Common myeloid progenitor, CD34-positive (primary cell): ENCODE measurements at regions of chr9 and their contacts with region 1.

Region 1: GRCh38 chr9:94002316-94003140 is 47.4 kb upstream of the BARX1 start:
- DNase-seq: peak; percentile 54 to 79 (median 72)
- H3K4me3 ChIP-seq: no peak overlapping the region
- H3K27ac ChIP-seq: no peak overlapping the region
- H3K4me1 ChIP-seq: no peaks in the 10 kb centered on the region
- H3K27me3 ChIP-seq: peaks cover 0 to 6% (median 2%) of the 10 kb centered on the region in 5 experiments

Region 2: DNA sequence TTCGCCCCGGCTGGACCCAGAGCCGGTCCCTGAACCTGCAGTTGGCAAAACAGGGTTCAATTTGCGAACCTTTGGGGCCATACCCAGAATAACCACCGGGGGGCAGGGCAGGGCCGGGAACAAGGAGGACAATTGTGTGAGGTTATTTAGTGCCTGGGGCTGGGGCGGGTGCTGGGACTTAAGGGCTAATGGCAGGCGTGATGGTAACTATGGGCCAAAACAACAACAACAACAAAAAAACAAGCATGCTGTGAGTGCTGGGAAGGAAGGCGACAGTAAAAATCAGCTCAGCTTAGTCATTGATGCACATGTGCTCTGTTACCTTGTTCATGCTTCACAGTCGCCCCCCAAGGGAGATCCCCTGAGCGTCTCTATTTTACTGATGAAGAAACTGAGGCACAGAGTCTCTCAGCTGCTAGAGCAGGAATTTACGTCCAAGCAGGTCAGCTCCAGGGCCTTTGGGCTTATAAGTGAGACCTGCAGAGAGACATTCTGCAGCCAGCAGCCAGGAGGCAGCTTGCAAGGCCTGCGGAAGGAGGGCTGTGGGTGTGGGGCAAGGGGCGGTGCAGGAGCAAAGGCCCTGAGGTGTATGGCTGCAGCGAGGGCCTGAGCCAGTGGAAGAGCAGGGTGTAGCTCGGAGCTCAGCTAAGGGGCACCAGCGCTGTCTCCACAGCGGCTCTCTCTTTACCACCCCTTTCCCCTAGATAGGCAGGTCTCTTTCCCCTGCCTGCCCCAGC is 320.1 kb before region 1 on chr9:
- CTCF ChIA-PET with region 1: interaction called, 27 read pairs
- POLR2A ChIA-PET with region 1: no interaction called
- DNase-seq: peak; percentile 35 to 60 (median 51)
- H3K4me3 ChIP-seq: no peak overlapping the region
- H3K27ac ChIP-seq: no peak overlapping the region
- H3K4me1 ChIP-seq: peaks cover 0 to 2% (median 0%) of the 10 kb centered on the region in 4 experiments
- H3K27me3 ChIP-seq: peaks cover 0 to 2% (median 0%) of the 10 kb centered on the region in 5 experiments

Region 3: DNA sequence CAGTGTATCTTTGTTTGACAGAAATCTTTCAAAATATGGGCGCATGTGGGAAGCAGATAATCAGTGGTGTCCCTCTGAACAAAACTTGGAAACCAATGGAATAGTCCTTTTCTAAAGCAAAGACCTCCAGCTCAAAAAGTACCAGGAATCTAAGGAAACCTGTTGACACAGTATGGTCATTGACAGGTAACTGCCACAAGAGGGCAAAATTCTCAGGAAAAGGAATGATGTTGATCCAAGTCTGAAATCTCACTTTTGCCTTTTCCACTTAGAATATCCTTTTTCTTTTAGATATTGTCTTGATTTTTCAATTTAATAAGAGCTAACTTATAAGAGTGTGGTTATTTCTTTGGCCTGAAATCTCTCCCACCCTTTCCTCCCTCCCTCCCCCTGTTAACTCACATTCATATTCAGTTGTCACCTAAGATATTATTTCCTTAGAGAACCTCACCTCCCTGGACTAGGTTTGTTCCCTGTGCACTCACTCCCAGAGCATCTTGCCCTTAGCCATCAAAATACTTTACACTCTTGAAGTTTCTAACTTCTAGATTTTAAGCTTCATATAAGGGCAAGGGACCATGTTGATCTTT is 11.6 kb after region 1 on chr9:
- CTCF ChIA-PET with region 1: interaction called, 43 read pairs
- POLR2A ChIA-PET with region 1: no interaction called
- DNase-seq: peak; percentile 14 to 40 (median 19)
- H3K4me3 ChIP-seq: no peak overlapping the region
- H3K27ac ChIP-seq: no peak overlapping the region
- H3K4me1 ChIP-seq: peaks cover 0 to 7% (median 4%) of the 10 kb centered on the region in 4 experiments
- H3K27me3 ChIP-seq: no peaks in the 10 kb centered on the region

Region 4: GRCh38 chr9:94649100-94649819 is 646.7 kb after region 1 on chr9:
- CTCF ChIA-PET with region 1: no interaction called
- POLR2A ChIA-PET with region 1: no interaction called
- DNase-seq: peak; percentile 29 to 83 (median 80)
- H3K4me3 ChIP-seq: no peak overlapping the region
- H3K27ac ChIP-seq: no peak overlapping the region
- H3K4me1 ChIP-seq: peaks cover 4 to 17% (median 5%) of the 10 kb centered on the region in 4 experiments
- H3K27me3 ChIP-seq: peaks cover 0 to 2% (median 0%) of the 10 kb centered on the region in 5 experiments